ENCODE measurements at regions of chr14 and their contacts with region 1.

Region 1: DNA sequence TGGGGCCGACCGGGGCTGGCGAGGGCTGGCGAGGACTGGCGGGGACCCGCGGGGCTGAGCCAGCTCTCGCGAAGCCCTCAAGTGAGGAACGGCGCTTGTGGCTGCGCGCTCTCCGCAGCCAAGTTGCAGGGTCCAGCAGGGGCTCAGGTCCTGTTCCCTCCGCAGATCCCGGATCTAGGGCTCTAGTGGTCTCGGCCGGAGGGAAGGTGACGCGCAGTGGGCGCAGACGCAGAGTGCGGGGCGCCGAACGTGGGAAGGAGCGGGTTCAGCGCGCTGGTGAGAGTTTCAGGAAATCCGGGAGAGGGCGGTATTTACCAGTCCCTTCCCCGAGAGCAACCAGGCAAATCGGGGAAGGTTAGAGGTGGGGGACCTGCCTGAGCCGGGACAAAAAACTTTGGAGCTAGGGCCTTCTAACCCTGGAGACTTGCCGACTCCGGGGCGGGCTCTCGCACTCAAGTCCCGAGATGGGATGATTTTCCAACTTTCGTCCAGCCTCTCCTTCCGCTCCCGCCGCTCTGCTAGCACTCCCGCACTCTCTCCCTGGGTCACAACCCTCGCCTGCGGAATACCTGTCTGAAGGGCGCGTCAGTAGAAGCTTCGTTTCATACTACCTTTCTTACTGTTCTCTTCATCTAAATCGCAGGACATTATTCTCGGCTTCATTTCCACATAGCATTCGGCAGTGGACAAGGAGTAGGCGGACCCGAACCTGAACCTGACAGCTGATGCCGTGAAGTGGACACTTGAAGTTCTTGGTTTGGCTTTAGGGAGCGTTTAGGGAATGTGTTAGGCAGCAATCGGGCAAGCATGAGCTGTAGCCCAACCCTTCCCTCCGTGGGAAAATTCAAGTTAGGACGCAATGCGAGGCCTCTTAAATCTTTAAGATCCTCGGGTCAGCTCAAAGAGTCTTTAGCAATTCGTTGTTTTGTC is 13.6 kb upstream of the PAX9 start:
- DNase-seq: peak; percentile 71 to 81
- H3K4me3 ChIP-seq: peak overlapping the region; percentile 59
- H3K4me3 Mint-ChIP-seq: peak overlapping the region; percentile 92
- H3K27ac Mint-ChIP-seq: peak overlapping the region; percentile 85
- H3K4me1 ChIP-seq: 0 out of 2 replicates have a peak, but pooled peaks cover 4% of the 10 kb centered on the region
- H3K4me1 Mint-ChIP-seq: peaks cover 6% of the 10 kb centered on the region
- H3K27me3 ChIP-seq: no peaks in the 10 kb centered on the region; the same call in 1 of the 2 replicates
- H3K27me3 Mint-ChIP-seq: no peaks in the 10 kb centered on the region
- CTCF ChIP-seq: peak; percentile 71 to 72

Region 2: DNA sequence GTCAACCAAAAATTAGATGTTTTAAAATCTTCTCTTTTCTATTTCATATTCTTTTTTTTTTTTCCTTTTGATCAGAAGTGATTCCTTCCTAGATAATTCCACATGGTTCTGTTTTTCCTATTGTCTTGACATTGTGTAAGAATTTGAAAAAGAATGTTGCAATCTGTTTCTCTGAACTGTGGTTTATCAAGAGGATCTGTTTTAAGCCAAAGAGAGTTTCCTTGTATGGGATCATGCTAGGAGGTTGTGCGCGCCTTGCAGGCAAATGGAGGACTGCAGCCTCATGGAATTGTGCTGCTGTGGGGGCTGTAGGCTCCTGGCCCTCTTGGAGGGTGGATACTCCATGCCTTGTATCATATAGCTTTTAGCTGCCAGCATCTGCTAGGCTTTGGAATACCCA is 284.4 kb before region 1 on chr14:
- CTCF ChIA-PET with region 1: no interaction called
- POLR2A ChIA-PET with region 1: no interaction called
- intact Hi-C with region 1: no loop called
- DNase-seq: no peak
- H3K4me3 ChIP-seq: no peak overlapping the region
- H3K4me3 Mint-ChIP-seq: no peak overlapping the region
- H3K27ac Mint-ChIP-seq: no peak overlapping the region
- H3K4me1 ChIP-seq: 0 out of 2 replicates have a peak, but pooled peaks cover 6% of the 10 kb centered on the region
- H3K4me1 Mint-ChIP-seq: peaks cover 10% of the 10 kb centered on the region
- H3K27me3 ChIP-seq: no peaks in the 10 kb centered on the region; the same call in 1 of the 2 replicates
- H3K27me3 Mint-ChIP-seq: no peaks in the 10 kb centered on the region
- CTCF ChIP-seq: no peak

Region 3: DNA sequence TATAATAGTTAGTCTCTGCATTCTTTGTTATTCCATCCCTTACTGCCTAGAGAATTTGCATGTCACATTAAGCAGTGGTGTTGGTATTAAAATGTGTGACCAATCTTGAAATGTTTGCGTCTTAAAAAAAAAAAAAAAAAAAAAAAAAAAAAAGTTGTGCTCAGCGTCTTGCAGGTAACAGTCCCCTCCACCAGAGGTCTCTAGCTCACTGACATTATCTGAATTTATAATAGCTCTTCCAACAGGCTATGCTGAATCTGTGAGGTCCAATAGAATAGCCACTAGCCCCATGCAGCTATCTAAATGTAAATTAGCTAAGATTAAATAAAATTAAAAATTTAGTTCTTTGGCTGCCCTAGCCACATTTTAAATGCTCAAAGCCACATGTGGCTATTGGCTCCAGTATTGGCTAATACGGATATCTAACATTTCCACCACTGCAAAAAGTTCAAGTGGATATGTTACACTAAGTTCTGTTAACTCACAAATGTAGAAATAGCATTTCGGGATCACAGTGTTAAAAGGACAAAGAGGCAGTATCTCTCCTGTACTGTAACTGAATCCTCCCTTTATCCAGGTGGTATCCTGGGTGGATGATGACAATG is 94.3 kb before region 1 on chr14:
- CTCF ChIA-PET with region 1: interaction called, 10 read pairs
- POLR2A ChIA-PET with region 1: interaction called, 19 read pairs
- intact Hi-C with region 1: no loop called
- DNase-seq: peak in 1 of 2 experiments; percentile 48
- H3K4me3 ChIP-seq: no peak overlapping the region
- H3K4me3 Mint-ChIP-seq: no peak overlapping the region
- H3K27ac Mint-ChIP-seq: no peak overlapping the region
- H3K4me1 ChIP-seq: no peaks in the 10 kb centered on the region
- H3K4me1 Mint-ChIP-seq: no peaks in the 10 kb centered on the region
- H3K27me3 ChIP-seq: no peaks in the 10 kb centered on the region
- H3K27me3 Mint-ChIP-seq: no peaks in the 10 kb centered on the region
- CTCF ChIP-seq: peak; percentile 65 to 80

Region 4: GRCh38 chr14:36661756-36662498 is 13.8 kb after region 1 on chr14 and contains the start of gene PAX9:
- CTCF ChIA-PET with region 1: interaction called, 10 read pairs
- POLR2A ChIA-PET with region 1: no interaction called
- intact Hi-C with region 1: no loop called
- DNase-seq: peak; percentile 93 to 95
- H3K4me3 ChIP-seq: peak within 1 kb of the TSS; percentile 64
- H3K4me3 Mint-ChIP-seq: peak within 1 kb of the TSS; percentile 82
- H3K27ac Mint-ChIP-seq: peak within 1 kb of the TSS; percentile 83
- H3K4me1 ChIP-seq: peaks cover 5% of the 10 kb centered on the region; the same call in 1 of the 2 replicates
- H3K4me1 Mint-ChIP-seq: no peaks in the 10 kb centered on the region
- H3K27me3 ChIP-seq: no peaks in the 10 kb centered on the region
- H3K27me3 Mint-ChIP-seq: no peaks in the 10 kb centered on the region
- CTCF ChIP-seq: no peak
- total RNA-seq, gene PAX9: 6.9 and 7.2 TPM in 2 replicates

Region 5: DNA sequence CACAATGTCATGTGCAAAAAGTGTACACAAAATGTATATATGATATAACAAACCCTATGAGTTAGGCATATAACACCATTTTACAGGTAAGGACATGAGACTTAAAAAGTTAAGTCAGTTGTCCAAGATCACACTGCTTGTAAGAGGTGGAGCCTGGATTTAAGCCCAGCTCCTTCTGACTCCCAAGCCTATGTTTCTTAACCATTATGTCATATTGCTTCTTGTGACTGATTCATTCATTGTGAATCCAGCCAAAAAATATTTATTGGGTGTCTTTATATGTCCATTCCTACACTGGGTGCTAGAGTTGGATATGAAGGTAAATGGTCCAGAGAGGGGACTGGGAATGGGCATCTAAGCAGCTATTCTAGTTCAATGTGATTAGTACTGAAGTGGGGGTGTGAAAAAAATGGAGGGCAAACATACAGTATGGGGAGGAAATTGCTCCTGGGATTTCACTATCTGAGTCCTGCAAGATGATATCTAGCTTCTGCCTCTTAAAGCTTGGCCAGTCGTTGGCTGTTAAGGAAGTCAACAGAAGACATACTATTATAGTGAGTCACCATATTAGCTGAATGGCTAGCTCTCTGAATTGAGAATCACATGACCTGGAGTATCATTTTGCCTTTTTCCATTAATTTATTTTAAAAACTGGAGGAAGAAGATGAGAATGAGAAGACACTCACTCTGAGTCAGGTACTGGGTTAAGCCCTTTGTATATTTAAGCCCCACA is 42.4 kb after region 1 on chr14:
- CTCF ChIA-PET with region 1: no interaction called
- POLR2A ChIA-PET with region 1: no interaction called
- intact Hi-C with region 1: no loop called
- DNase-seq: no peak
- H3K4me3 ChIP-seq: no peak overlapping the region
- H3K4me3 Mint-ChIP-seq: no peak overlapping the region
- H3K27ac Mint-ChIP-seq: no peak overlapping the region
- H3K4me1 ChIP-seq: no peaks in the 10 kb centered on the region
- H3K4me1 Mint-ChIP-seq: no peaks in the 10 kb centered on the region
- H3K27me3 ChIP-seq: no peaks in the 10 kb centered on the region; the same call in 1 of the 2 replicates
- H3K27me3 Mint-ChIP-seq: no peaks in the 10 kb centered on the region
- CTCF ChIP-seq: no peak

Region 6: DNA sequence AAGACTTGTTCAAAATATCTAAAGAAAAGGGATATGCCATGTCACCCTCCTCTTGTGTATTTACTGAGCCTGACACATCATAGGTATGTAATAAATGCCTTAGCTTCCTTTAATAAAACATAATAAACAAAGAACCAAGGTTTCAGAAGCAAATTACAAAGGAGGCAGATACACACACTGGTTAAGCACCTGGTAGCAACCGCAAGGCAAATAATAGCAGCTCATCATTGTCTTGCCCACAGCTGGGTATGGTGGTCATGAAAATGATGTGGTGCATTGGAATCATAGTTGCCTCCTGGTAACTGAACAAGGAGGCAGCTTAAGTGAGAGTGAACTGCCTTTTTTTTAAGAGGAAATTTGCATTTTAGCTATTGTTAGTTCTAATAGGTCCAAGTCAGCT is 52.6 kb after region 1 on chr14:
- CTCF ChIA-PET with region 1: no interaction called
- POLR2A ChIA-PET with region 1: no interaction called
- intact Hi-C with region 1: loop called (anchors 2 kb)
- DNase-seq: no peak
- H3K4me3 ChIP-seq: no peak overlapping the region
- H3K4me3 Mint-ChIP-seq: no peak overlapping the region
- H3K27ac Mint-ChIP-seq: no peak overlapping the region
- H3K4me1 ChIP-seq: peaks cover 9% of the 10 kb centered on the region
- H3K4me1 Mint-ChIP-seq: peaks cover 6% of the 10 kb centered on the region
- H3K27me3 ChIP-seq: no peaks in the 10 kb centered on the region
- H3K27me3 Mint-ChIP-seq: no peaks in the 10 kb centered on the region
- CTCF ChIP-seq: no peak

Region 7: DNA sequence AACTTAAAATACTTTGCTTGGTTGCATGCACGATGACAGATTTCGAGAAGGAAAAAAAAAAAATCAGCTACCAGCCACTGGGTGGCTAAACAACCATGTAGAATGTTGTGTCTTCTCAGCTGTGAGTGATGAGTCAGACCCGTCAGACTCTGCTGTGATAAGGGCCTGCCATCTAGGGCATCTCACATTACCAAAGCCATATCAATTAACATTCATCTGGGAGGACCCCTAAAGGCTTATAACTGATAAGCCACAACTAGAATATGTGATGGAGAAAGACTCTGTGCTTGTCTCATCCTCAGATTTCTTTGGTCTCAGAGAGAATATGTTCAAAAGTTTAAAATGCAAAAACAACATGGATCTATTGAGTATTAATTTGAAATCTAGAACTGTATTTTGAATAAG is 125.0 kb after region 1 on chr14:
- CTCF ChIA-PET with region 1: interaction called, 3 read pairs
- POLR2A ChIA-PET with region 1: no interaction called
- intact Hi-C with region 1: loop called (anchors 2 kb)
- DNase-seq: peak; percentile 56 to 58
- H3K4me3 ChIP-seq: no peak overlapping the region
- H3K4me3 Mint-ChIP-seq: no peak overlapping the region
- H3K27ac Mint-ChIP-seq: peak overlapping the region; percentile 57
- H3K4me1 ChIP-seq: peaks cover 51% of the 10 kb centered on the region
- H3K4me1 Mint-ChIP-seq: peaks cover 29% of the 10 kb centered on the region
- H3K27me3 ChIP-seq: no peaks in the 10 kb centered on the region
- H3K27me3 Mint-ChIP-seq: no peaks in the 10 kb centered on the region
- CTCF ChIP-seq: peak; percentile 46 to 48

Measured in Caco-2 (cell line).